Ovary (tissue), 10 donors: ENCODE measurements at regions of chr9 and their contacts with region 1.

Region 1: DNA sequence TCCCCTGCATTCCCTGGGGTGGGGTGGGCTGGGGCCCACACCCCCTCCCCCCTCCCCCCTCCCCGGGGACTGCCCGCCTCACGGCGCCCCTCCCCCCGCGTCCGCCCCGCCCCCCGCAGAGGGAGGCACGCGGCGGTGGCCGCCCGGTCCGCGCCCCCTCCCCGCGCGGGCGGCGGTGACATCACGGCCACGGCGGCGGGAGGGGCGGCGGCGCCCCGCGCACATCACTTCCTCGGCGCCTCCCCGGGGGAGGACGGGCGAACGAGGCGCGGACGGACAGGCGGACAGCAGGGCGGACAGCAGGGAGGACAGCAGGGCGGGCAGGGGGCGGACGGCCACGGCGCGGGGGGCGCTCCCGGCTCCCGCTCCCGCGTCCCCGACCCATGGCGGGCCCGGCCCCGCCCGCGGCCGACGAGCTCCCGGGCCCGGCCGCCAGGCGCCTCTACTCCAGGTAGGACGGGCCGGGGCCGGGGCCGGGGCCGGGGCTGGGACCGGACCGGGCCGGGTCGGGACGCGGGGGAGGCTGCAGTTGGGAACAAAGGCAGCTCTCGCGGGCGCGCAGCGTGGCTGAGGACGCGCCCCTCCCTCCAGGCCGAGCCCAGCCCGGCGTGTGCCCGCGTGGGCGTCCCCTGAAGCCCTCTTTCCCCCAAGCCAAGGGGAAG is at the start of gene GPSM1:
- DNase-seq: peak; percentile 69 to 85 (median 77)
- H3K4me3 ChIP-seq: peak within 1 kb of the TSS; percentile 69
- H3K27ac ChIP-seq: peak within 1 kb of the TSS; percentile 85 to 94
- H3K4me1 ChIP-seq: peaks cover 19% of the 10 kb centered on the region
- H3K27me3 ChIP-seq: no peaks in the 10 kb centered on the region
- CTCF ChIP-seq: peak in 2 of 3 donors; percentile 17 to 25
- EP300 ChIP-seq: no peak
- POLR2A ChIP-seq: peak; percentile 59
- total RNA-seq, gene GPSM1: 14.1 to 65.4 (median 36.4) TPM

Region 2: DNA sequence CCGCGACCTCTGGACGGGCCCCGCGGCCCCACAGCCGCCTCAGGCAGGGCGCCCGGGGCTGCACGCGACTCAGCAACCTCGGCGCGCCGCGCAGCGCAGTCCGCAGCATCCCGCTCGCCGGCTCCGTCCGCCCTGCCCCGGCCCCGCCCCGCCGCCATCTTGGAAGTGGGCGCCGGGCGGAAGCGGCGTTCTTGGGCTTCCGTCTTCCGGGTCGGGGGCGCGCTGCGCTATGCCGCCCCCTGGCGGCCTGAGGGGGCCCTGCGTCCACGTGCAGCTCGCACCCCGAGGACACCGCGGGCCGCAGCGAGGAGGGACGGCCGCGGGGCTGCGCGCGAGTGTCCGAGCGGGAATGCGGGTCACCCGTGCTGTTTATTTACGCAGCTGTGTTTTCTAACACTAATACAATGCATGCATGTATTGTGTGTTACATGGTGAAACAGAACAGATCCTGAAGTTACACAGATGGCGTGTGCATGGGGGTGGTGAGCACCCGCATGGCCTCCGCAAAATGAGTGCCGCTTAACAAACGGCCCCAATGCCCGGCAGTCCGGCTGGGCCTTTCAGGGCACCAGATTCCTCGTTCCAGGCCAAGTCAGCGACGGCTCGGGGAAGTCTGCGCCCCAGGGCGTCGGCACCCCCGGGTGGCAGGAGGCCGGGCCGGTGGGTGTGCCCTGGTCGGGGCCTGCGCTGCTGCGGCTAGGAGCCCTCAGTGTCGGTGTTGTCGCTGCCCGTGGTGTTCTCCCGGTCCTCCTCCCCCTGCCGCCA is 36.3 kb after region 1 on chr9 and contains the start of gene DNLZ:
- intact Hi-C with region 1: loop called in 1 of 4 experiments (anchors 5 kb)
- DNase-seq: peak; percentile 80 to 92 (median 87)
- H3K4me3 ChIP-seq: peak within 1 kb of the TSS; percentile 93
- H3K27ac ChIP-seq: peak within 1 kb of the TSS; percentile 79 to 89
- H3K4me1 ChIP-seq: peaks cover 7% of the 10 kb centered on the region
- H3K27me3 ChIP-seq: no peaks in the 10 kb centered on the region
- CTCF ChIP-seq: peak; percentile 98 to 99 (median 99)
- EP300 ChIP-seq: no peak
- POLR2A ChIP-seq: peak; percentile 33
- total RNA-seq, gene DNLZ: 14.4 to 33.3 (median 24.2) TPM